Caco-2 (cell line): ENCODE measurements at regions of chr11 and their contacts with region 1.

Region 1: GRCh38 chr11:44036811-44037657 is 10.7 kb upstream of the ACCSL start:
- DNase-seq: peak; percentile 67 to 72
- H3K4me3 ChIP-seq: no peak overlapping the region
- H3K4me3 Mint-ChIP-seq: no peak overlapping the region
- H3K27ac Mint-ChIP-seq: no peak overlapping the region
- H3K4me1 ChIP-seq: no peaks in the 10 kb centered on the region
- H3K4me1 Mint-ChIP-seq: no peaks in the 10 kb centered on the region
- H3K27me3 ChIP-seq: no peaks in the 10 kb centered on the region
- H3K27me3 Mint-ChIP-seq: peaks cover 10% of the 10 kb centered on the region
- CTCF ChIP-seq: peak; percentile 83 to 88

Region 2: DNA sequence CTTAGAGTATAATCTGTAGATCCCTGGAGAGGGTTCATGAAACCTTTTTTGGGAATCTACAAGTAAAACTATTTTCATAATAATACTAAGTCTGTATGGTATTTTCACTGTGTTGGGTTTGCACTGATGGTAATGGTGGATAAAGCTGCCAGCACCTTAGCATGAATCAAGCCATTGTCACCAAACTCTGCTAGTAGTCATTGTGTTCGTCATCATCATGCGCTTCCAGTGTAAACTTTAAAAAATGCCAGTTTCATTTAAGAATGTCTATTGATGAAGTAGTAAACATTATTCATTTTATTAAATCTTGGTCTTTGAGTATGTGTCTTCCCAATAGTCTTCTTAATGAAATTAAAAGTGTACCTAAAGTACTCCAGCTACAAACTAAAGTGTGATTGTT is 141.4 kb before region 1 on chr11:
- CTCF ChIA-PET with region 1: no interaction called
- POLR2A ChIA-PET with region 1: no interaction called
- intact Hi-C with region 1: loop called (anchors 1 kb)
- DNase-seq: no peak
- H3K4me3 ChIP-seq: no peak overlapping the region
- H3K4me3 Mint-ChIP-seq: no peak overlapping the region
- H3K27ac Mint-ChIP-seq: no peak overlapping the region
- H3K4me1 ChIP-seq: no peaks in the 10 kb centered on the region
- H3K4me1 Mint-ChIP-seq: no peaks in the 10 kb centered on the region
- H3K27me3 ChIP-seq: no peaks in the 10 kb centered on the region
- H3K27me3 Mint-ChIP-seq: no peaks in the 10 kb centered on the region
- CTCF ChIP-seq: no peak

Region 3: DNA sequence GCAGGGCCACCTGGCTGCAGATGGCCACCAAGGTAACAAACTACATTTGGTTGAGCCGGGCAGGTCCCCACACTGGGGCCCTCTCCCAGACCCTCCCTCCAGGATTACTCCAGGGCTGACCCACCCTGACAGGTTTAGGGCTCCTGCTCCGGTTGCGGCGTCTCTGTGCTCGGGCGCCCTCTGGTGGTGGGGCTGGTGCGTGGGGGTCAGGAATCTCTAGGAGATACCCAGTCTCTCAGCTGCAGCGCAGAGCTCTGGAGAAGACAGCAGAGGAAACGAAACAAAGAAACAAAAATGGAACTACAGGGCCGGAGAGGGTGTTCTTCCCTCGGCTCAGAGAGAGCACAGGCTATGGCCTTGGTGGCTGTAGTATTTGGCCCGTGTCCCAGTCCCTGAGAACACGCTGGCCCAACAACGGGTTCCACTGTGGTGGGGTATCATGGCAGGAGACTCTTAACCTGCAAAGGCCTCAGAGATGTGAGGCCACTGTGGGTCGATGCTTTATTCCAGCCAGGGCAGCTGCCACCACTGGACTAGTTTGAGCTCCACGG is 92.2 kb before region 1 on chr11:
- CTCF ChIA-PET with region 1: interaction called, 3 read pairs
- POLR2A ChIA-PET with region 1: no interaction called
- intact Hi-C with region 1: loop called (anchors 1 kb)
- DNase-seq: peak; percentile 66 to 84
- H3K4me3 ChIP-seq: no peak overlapping the region
- H3K4me3 Mint-ChIP-seq: peak overlapping the region; percentile 81
- H3K27ac Mint-ChIP-seq: no peak overlapping the region
- H3K4me1 ChIP-seq: peaks cover 8% of the 10 kb centered on the region
- H3K4me1 Mint-ChIP-seq: peaks cover 12% of the 10 kb centered on the region
- H3K27me3 ChIP-seq: peaks cover 11% of the 10 kb centered on the region
- H3K27me3 Mint-ChIP-seq: peaks cover 24% of the 10 kb centered on the region
- CTCF ChIP-seq: peak; percentile 87

Region 4: GRCh38 chr11:43984519-43985385 is 52.3 kb before region 1 on chr11:
- CTCF ChIA-PET with region 1: no interaction called
- POLR2A ChIA-PET with region 1: no interaction called
- intact Hi-C with region 1: loop called (anchors 2 kb)
- DNase-seq: peak; percentile 55 to 60
- H3K4me3 ChIP-seq: no peak overlapping the region
- H3K4me3 Mint-ChIP-seq: no peak overlapping the region
- H3K27ac Mint-ChIP-seq: peak overlapping the region; percentile 2
- H3K4me1 ChIP-seq: peaks cover 10% of the 10 kb centered on the region
- H3K4me1 Mint-ChIP-seq: peaks cover 14% of the 10 kb centered on the region
- H3K27me3 ChIP-seq: no peaks in the 10 kb centered on the region
- H3K27me3 Mint-ChIP-seq: no peaks in the 10 kb centered on the region
- CTCF ChIP-seq: no peak